Activated CD4-positive, alpha-beta T cell treated with anti-CD3 and anti-CD28 coated beads for 36 hours (primary cell): ENCODE measurements at regions of chr13 and their contacts with region 1.

Region 1: DNA sequence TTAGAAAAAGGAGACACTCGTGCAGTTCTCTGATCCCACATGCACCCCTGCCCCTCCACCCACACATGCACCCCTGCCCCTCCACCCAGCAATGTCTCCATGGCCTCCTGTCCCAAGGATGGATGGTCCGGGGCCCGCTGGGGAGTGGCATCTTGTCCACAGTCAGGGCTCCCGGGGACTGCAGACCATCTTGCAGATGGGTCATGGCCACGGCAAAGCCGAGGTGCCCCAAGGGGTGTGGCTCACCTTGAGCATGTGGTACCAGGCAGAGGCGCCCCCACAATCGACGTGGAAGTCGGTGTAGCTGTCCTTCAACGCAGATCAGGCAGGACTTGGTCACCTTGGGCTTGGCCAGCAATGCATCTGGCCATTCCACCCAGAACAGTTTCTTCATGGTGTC is 216.7 kb downstream of the TUBA3C start:
- DNase-seq: no peak
- ATAC-seq: no peak
- H3K4me3 Mint-ChIP-seq: no peak overlapping the region
- H3K27ac Mint-ChIP-seq: no peak overlapping the region
- H3K4me1 Mint-ChIP-seq: no peaks in the 10 kb centered on the region
- H3K27me3 Mint-ChIP-seq: no peaks in the 10 kb centered on the region

Region 2: GRCh38 chr13:19023115-19023514 is 58.2 kb after region 1 on chr13:
- CTCF ChIA-PET with region 1: no interaction called
- POLR2A ChIA-PET with region 1: no interaction called
- intact Hi-C with region 1: loop called in 1 of 2 experiments (anchors 5 kb)
- DNase-seq: no peak
- ATAC-seq: no peak
- H3K4me3 Mint-ChIP-seq: no peak overlapping the region
- H3K27ac Mint-ChIP-seq: no peak overlapping the region
- H3K4me1 Mint-ChIP-seq: no peaks in the 10 kb centered on the region
- H3K27me3 Mint-ChIP-seq: peaks cover 6% of the 10 kb centered on the region

Region 3: GRCh38 chr13:19117913-19118739 is 153.2 kb after region 1 on chr13:
- CTCF ChIA-PET with region 1: no interaction called
- POLR2A ChIA-PET with region 1: no interaction called
- intact Hi-C with region 1: no loop called
- DNase-seq: no peak
- ATAC-seq: no peak
- H3K4me3 Mint-ChIP-seq: no peak overlapping the region
- H3K27ac Mint-ChIP-seq: no peak overlapping the region
- H3K4me1 Mint-ChIP-seq: no peaks in the 10 kb centered on the region
- H3K27me3 Mint-ChIP-seq: no peaks in the 10 kb centered on the region

Region 4: GRCh38 chr13:20285530-20285929 is 1320.6 kb after region 1 on chr13:
- CTCF ChIA-PET with region 1: no interaction called
- POLR2A ChIA-PET with region 1: no interaction called
- intact Hi-C with region 1: no loop called
- DNase-seq: no peak
- ATAC-seq: no peak
- H3K4me3 Mint-ChIP-seq: no peak overlapping the region
- H3K27ac Mint-ChIP-seq: no peak overlapping the region
- H3K4me1 Mint-ChIP-seq: no peaks in the 10 kb centered on the region
- H3K27me3 Mint-ChIP-seq: no peaks in the 10 kb centered on the region

Region 5: GRCh38 chr13:20320885-20321284 is 1355.9 kb after region 1 on chr13:
- CTCF ChIA-PET with region 1: no interaction called
- POLR2A ChIA-PET with region 1: no interaction called
- intact Hi-C with region 1: no loop called
- DNase-seq: no peak
- ATAC-seq: no peak
- H3K4me3 Mint-ChIP-seq: no peak overlapping the region
- H3K27ac Mint-ChIP-seq: no peak overlapping the region
- H3K4me1 Mint-ChIP-seq: no peaks in the 10 kb centered on the region
- H3K27me3 Mint-ChIP-seq: peaks cover 4% of the 10 kb centered on the region